K562 (cell line): ENCODE measurements at regions of chr2 and their contacts with region 1.

Region 1: DNA sequence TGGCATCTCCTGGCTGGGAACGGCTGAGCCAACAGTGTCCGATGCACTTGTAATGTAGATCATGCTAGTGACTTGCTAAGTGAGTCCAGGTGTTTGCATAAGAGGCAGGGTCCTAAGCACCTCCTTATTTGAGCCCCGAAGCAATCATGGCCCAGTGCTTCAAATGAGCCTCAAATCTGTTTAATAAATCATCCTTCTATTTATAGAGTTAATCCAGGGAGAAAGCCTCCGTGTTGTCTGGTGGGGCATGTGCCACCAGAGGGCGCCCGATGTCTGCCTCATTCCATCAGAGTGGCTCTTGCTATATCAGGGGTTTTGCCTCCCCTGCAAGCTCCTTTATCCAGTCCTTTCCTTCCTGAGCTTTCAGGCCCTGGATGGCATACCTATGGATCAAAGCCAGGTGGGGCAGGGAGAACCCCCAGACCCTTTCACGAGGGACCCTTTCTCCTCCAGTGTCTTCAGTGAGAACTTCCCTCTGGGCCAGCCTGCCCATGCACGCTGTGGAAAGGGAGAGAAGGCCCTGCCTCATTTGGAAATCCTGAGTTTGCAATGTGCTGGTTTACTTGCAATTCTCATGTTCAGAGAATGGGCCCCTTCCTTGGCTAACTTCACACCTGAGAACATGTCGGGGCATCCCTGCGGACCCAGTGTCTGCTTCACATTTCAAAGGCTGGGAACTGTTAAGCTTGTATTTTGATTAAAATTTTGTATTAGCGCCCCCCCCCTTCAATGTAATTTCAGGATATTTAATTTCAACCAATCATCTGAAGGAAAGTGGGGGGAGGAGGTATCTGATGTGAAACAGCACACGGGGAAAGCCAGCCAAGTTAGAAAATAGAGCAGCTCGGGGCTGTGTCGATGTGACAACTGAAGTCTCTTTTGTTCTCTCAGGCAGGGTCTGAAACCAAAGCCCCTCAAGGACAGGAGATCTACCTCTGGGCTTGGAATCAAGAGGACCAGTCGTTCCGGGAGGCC is 39.7 kb downstream of the RDH14 start:
- DNase-seq: peak; percentile 71 to 77 (median 75)
- ATAC-seq: peak; percentile 97
- H3K4me3 ChIP-seq: no peak overlapping the region
- H3K27ac ChIP-seq: no peak overlapping the region
- H3K4me1 ChIP-seq: 0 out of 5 replicates have a peak, but pooled peaks cover 0 to 2% of the 10 kb centered on the region in 2 experiments
- H3K27me3 ChIP-seq: peaks cover 0 to 6% of the 10 kb centered on the region in 2 experiments; a peak in 2 of 5 replicates
- CTCF ChIP-seq: peak; percentile 77 to 87 (median 85)
- EP300 ChIP-seq: no peak
- POLR2A ChIP-seq: no peak
- RAD21 ChIP-seq: peak; percentile 88 to 91

Region 2: GRCh38 chr2:17934721-17935120 is 586.0 kb before region 1 on chr2:
- CTCF ChIA-PET with region 1: no interaction called
- POLR2A ChIA-PET with region 1: no interaction called
- in situ Hi-C with region 1: no loop called
- intact Hi-C with region 1: no loop called
- DNase-seq: no peak
- ATAC-seq: no peak
- H3K4me3 ChIP-seq: no peak overlapping the region
- H3K27ac ChIP-seq: no peak overlapping the region
- H3K4me1 ChIP-seq: no peaks in the 10 kb centered on the region
- H3K27me3 ChIP-seq: peaks cover 0 to 16% of the 10 kb centered on the region in 2 experiments; a peak in 4 of 5 replicates
- CTCF ChIP-seq: no peak
- EP300 ChIP-seq: no peak
- POLR2A ChIP-seq: no peak
- RAD21 ChIP-seq: no peak

Region 3: DNA sequence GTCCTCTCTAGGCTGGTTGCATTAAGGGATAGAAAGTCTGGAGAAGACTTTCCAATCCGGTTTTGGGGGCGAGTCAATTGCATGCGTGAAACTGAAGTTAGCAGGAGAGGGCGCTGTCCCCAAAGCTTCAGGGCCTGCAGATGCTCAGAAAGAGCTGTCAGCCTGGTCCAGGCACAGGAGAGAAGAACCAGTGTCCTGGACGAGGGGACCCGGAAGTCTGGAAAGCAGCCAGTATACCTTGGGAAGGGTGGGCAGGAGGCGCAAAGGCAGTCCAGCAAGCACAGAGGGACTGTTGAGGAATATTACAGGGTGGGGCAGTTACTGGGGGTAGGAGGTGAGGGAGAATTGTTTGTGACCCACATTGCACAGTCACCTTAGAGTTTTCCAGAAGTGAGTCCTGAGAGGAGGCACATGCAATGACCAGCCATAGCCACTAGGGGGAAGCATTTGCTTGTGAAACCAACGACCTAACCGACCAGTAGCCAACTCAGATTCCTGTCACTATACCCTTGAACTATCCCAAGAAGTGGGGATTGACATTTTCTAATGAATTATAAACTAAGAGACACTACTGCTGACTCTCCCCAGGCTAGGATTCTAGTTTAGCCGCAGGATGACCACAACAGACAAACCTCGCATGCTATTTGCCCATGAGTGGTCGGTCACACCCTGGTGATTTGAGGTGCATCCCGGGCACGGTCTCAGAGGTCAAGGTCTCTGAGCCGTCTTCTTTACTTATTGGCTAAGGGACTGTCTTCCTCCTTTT is 133.1 kb before region 1 on chr2:
- CTCF ChIA-PET with region 1: no interaction called
- POLR2A ChIA-PET with region 1: no interaction called
- in situ Hi-C with region 1: no loop called
- intact Hi-C with region 1: loop called (anchors 5 kb)
- DNase-seq: peak; percentile 52 to 75 (median 71)
- ATAC-seq: peak; percentile 98
- H3K4me3 ChIP-seq: no peak overlapping the region
- H3K27ac ChIP-seq: no peak overlapping the region
- H3K4me1 ChIP-seq: no peaks in the 10 kb centered on the region
- H3K27me3 ChIP-seq: no peaks in the 10 kb centered on the region
- CTCF ChIP-seq: peak; percentile 72 to 87 (median 85)
- EP300 ChIP-seq: no peak
- POLR2A ChIP-seq: no peak
- RAD21 ChIP-seq: peak; percentile 68 to 73

Region 4: GRCh38 chr2:18435421-18436037 is 85.2 kb before region 1 on chr2:
- CTCF ChIA-PET with region 1: no interaction called
- POLR2A ChIA-PET with region 1: no interaction called
- in situ Hi-C with region 1: no loop called
- intact Hi-C with region 1: loop called (anchors 5 kb)
- DNase-seq: peak in 2 of 4 experiments; percentile 20 to 63
- ATAC-seq: peak; percentile 75
- H3K4me3 ChIP-seq: no peak overlapping the region
- H3K27ac ChIP-seq: no peak overlapping the region
- H3K4me1 ChIP-seq: no peaks in the 10 kb centered on the region
- H3K27me3 ChIP-seq: no peaks in the 10 kb centered on the region
- CTCF ChIP-seq: peak; percentile 10 to 76 (median 37); a peak in 3 of 6 replicates
- EP300 ChIP-seq: no peak
- POLR2A ChIP-seq: no peak
- RAD21 ChIP-seq: peak; percentile 66 to 83

Region 5: DNA sequence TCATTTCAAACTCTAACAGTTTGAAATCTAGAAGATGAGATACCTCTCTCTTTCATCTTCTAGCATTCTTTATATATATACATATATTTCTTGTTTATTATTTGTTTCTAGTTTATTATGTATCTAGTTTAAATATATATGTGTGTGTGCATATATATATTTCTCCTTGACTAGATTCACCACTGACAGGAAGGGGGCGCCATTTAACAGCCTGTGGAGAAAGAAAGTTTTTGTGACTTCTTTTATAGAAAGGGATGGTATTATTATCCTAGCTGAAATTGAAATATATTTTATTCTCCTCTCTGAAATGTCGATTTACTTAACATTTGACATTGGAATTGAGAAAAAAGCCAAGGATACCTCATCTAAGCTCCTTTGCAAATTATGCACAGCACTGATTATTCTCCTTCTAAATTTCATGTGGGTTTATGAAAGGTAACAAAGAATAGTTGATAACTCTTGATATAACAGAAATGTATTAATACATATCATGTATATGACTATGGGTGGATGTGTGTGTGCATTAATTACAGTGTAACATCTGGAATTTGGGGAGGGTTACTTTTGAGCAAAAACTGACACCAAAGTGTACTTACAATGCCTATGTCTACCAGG is 229.3 kb after region 1 on chr2:
- CTCF ChIA-PET with region 1: no interaction called
- POLR2A ChIA-PET with region 1: no interaction called
- in situ Hi-C with region 1: no loop called
- intact Hi-C with region 1: loop called (anchors 2 kb)
- DNase-seq: peak in 3 of 4 experiments; percentile 10 to 51 (median 17)
- ATAC-seq: no peak
- H3K4me3 ChIP-seq: no peak overlapping the region
- H3K27ac ChIP-seq: no peak overlapping the region
- H3K4me1 ChIP-seq: no peaks in the 10 kb centered on the region
- H3K27me3 ChIP-seq: no peaks in the 10 kb centered on the region
- CTCF ChIP-seq: peak in 2 of 3 experiments; percentile 31 to 62; a peak in 3 of 6 replicates
- EP300 ChIP-seq: no peak
- POLR2A ChIP-seq: no peak
- RAD21 ChIP-seq: peak; percentile 74 to 76